Activated naive CD4-positive, alpha-beta T cell treated with anti-CD3 and anti-CD28 coated beads for 36 hours (primary cell): ENCODE measurements at regions of chr2 and their contacts with region 1.

Region 1: DNA sequence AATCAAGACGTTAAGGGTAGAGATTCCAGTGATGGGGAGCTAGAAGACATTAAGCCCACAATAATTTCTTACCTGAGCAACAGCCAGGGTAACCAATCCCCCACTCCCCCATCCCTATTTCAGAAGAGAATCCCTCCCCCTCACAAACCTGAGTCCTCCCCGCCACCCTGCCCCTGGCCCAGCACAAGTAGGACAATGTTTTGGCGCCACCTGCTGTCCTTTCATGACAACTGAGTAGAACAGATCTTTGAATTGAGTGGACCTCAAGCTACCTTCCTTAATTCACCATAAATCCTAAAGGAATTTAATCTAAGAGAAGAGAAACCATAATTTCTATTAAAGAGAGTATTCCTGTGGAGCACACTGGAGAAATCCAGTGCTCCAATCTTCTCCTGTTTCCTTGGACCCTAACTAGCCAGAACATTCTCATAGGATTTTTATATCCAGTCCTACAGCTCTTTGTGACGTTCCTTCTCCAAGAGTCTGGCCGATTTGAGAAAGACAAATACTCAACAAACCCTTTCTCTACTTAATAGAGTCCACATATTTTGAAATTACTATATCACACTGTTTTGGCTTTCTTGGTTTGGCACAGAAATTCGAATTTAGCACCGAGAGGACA is 41.1 kb downstream of the NHEJ1 start:
- DNase-seq: peak; percentile 78
- H3K4me3 Mint-ChIP-seq: no peak overlapping the region
- H3K27ac Mint-ChIP-seq: no peak overlapping the region
- H3K4me1 Mint-ChIP-seq: peaks cover 4% of the 10 kb centered on the region
- H3K27me3 Mint-ChIP-seq: no peaks in the 10 kb centered on the region

Region 2: GRCh38 chr2:218367415-218368153 is 751.9 kb before region 1 on chr2:
- CTCF ChIA-PET with region 1: no interaction called
- intact Hi-C with region 1: no loop called
- DNase-seq: peak; percentile 84
- H3K4me3 Mint-ChIP-seq: peak overlapping the region; percentile 73
- H3K27ac Mint-ChIP-seq: no peak overlapping the region
- H3K4me1 Mint-ChIP-seq: peaks cover 13% of the 10 kb centered on the region
- H3K27me3 Mint-ChIP-seq: no peaks in the 10 kb centered on the region

Region 3: GRCh38 chr2:219073413-219074129 is 46.0 kb before region 1 on chr2:
- CTCF ChIA-PET with region 1: interaction called, 64 read pairs
- intact Hi-C with region 1: loop called (anchors 1 kb)
- DNase-seq: peak; percentile 30
- H3K4me3 Mint-ChIP-seq: no peak overlapping the region
- H3K27ac Mint-ChIP-seq: no peak overlapping the region
- H3K4me1 Mint-ChIP-seq: no peaks in the 10 kb centered on the region
- H3K27me3 Mint-ChIP-seq: no peaks in the 10 kb centered on the region